WTC11 (cell line): ENCODE measurements at regions of chr5 and their contacts with region 1.

Region 1: GRCh38 chr5:180315762-180316212 is 23.9 kb upstream of the MAPK9 start:
- DNase-seq: peak; percentile 81
- ATAC-seq: peak; percentile 58
- H3K4me3 Mint-ChIP-seq: peak overlapping the region; percentile 20; the same call in 1 of the 2 replicates
- H3K27ac Mint-ChIP-seq: 0 out of 2 replicates have a peak overlapping the region, but pooled peaks have one; percentile 76
- H3K4me1 Mint-ChIP-seq: peaks cover 21% of the 10 kb centered on the region
- H3K27me3 Mint-ChIP-seq: no peaks in the 10 kb centered on the region
- CTCF ChIP-seq: peak; percentile 93

Region 2: DNA sequence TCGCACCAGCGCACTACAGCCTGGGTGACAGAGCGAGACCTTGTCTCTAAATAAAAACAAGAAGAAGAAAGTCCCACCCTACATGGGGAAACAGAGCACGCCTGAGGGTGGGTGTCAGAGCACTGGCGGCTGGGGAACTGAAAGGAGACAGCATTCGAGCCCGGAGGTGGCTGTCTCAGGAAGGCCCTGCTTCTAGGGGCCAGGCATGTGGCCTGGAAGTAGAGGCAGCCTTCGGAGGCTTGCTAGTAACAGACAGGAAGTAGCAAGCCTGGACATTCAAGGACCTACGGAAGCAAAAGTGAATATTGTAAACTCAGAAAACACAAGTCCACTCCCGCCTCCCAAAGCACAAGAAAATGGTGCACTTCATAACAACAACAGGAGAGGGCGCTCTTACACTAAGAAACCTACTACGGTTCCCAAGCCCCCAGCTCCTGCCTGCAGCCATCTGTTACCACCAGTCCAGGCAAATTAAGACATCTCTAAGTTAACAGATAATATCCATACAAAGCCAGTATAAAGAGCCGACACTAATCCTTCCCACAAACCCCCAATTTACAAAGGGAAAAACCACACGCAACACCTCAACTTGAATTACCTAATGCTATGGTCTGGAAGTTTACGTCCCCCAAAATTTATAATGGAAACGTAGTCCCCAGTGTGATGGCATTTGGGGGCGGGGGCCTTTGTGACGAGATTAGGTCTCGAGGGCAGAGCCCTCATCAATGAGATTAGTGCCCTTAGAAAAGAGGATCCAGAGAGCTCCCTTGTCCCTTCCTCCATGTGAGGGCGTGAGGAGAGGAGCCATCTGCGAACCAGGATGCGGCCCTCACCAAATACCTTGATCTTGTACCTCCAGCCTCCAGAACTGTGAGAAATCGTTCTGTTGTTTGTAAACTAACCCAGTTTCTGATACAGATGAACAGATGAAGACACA is 114.5 kb before region 1 on chr5:
- CTCF ChIA-PET with region 1: interaction called, 10 read pairs
- POLR2A ChIA-PET with region 1: no interaction called
- DNase-seq: peak; percentile 83
- ATAC-seq: peak; percentile 84
- H3K4me3 Mint-ChIP-seq: no peak overlapping the region
- H3K27ac Mint-ChIP-seq: no peak overlapping the region
- H3K4me1 Mint-ChIP-seq: peaks cover 2% of the 10 kb centered on the region; the same call in 1 of the 2 replicates
- H3K27me3 Mint-ChIP-seq: no peaks in the 10 kb centered on the region
- CTCF ChIP-seq: peak; percentile 84

Region 3: DNA sequence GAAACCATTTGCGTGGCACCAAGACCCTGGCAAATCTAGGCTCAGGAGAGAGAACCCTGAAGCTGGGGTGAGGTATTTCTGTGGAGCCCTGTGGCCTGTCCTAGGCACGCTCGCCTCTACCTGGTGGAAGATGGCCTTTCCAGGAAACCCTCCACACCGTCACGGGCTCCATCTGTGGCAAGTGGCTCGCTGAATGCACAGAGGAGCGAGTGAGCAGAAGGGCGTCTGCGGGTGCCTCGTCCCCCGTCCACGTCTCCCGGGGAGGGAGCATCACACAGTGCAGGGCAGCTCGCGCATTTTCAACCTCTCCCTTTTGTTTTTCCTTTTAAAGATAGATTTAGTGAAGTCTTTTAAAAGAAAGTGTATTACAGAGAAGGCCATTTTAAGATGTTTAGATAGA is 81.5 kb before region 1 on chr5:
- CTCF ChIA-PET with region 1: no interaction called
- POLR2A ChIA-PET with region 1: interaction called, 10 read pairs
- DNase-seq: no peak
- ATAC-seq: no peak
- H3K4me3 Mint-ChIP-seq: no peak overlapping the region
- H3K27ac Mint-ChIP-seq: no peak overlapping the region; the same call in 1 of the 2 replicates
- H3K4me1 Mint-ChIP-seq: peaks cover 8% of the 10 kb centered on the region
- H3K27me3 Mint-ChIP-seq: no peaks in the 10 kb centered on the region
- CTCF ChIP-seq: no peak

Region 4: DNA sequence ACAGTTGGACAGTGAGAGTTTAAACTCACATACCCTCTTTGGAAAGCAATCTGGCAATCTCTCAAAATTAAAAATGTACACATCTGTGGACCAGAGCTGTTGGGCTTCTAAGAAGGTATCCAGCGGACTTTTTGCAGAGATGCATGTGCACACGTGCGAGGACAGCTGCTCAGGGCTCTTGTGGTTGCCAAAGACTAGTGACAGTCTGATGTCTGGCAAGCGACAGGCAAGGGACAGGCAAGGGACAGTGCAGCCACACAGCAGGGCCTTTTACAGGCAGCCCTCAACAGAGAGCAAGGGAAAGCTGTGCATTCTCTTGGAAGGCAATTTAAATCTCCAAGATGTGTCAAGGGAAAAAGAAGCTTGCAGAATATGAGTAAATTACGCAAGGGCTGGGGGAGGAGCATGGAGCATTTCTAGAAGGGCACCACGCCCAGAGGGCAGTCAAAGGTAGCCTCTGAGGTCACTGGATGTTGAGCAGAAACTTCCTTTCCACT is 28.1 kb after region 1 on chr5:
- CTCF ChIA-PET with region 1: interaction called, 27 read pairs
- POLR2A ChIA-PET with region 1: interaction called, 6 read pairs
- DNase-seq: no peak
- ATAC-seq: peak; percentile 10
- H3K4me3 Mint-ChIP-seq: peak overlapping the region; percentile 50
- H3K27ac Mint-ChIP-seq: peak overlapping the region; percentile 99
- H3K4me1 Mint-ChIP-seq: peaks cover 89% of the 10 kb centered on the region
- H3K27me3 Mint-ChIP-seq: no peaks in the 10 kb centered on the region
- CTCF ChIP-seq: no peak

Region 5: DNA sequence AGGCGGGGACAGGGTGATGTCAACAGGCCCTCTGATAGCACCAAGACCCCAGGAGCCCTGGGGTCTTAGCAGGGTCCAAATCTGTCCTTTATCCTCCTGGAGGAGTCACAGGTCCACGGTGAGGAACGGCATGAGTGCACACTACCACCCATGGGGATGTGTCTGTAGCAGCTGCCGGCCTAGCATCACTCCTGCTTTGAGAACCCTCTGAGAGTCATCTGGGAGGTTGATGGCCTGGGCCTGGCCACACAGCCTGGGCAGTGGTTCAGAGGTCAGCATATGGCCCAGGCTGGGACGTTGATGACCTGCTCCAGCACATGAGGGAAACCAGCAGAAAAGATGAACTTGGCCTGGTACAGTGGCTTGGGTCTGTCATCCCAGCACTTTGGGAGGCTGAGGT is 39.2 kb after region 1 on chr5:
- CTCF ChIA-PET with region 1: no interaction called
- POLR2A ChIA-PET with region 1: no interaction called
- DNase-seq: no peak
- ATAC-seq: no peak
- H3K4me3 Mint-ChIP-seq: no peak overlapping the region
- H3K27ac Mint-ChIP-seq: no peak overlapping the region
- H3K4me1 Mint-ChIP-seq: peaks cover 28% of the 10 kb centered on the region
- H3K27me3 Mint-ChIP-seq: peaks cover 25% of the 10 kb centered on the region
- CTCF ChIP-seq: no peak

Region 6: DNA sequence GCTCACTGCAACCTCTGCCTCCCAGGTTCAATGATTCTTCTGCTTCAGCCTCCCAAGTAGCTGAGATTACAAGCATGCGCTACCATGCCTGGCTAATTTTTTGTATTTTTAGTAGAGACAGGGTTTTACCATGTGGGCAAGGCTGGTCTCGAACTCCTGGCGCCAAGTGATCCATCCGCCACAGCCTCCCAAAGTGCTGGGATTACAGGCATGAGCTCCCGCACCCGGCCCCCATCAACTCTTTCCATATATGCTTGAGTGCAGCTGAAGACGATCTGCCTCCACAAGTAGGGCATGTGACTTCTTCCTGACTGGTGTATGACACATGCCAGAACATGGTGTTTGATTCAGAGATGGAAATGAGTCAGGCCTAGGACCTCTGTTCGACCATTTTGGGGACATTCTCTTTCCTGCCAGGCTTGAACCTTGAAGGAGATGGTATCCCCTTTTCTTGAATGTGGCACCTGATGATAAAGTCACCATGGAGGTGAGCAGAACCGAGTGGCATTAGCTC is 170.9 kb after region 1 on chr5:
- CTCF ChIA-PET with region 1: interaction called, 26 read pairs
- POLR2A ChIA-PET with region 1: no interaction called
- DNase-seq: no peak
- ATAC-seq: no peak
- H3K4me3 Mint-ChIP-seq: no peak overlapping the region
- H3K27ac Mint-ChIP-seq: no peak overlapping the region
- H3K4me1 Mint-ChIP-seq: peaks cover 16% of the 10 kb centered on the region
- H3K27me3 Mint-ChIP-seq: no peaks in the 10 kb centered on the region
- CTCF ChIP-seq: no peak